ENCODE measurements at regions of chr10 and their contacts with region 1.

Region 1: GRCh38 chr10:72625608-72626443 is at the start of gene MICU1:
- DNase-seq: peak; percentile 93
- H3K4me3 Mint-ChIP-seq: peak within 1 kb of the TSS; percentile 96
- H3K27ac Mint-ChIP-seq: peak within 1 kb of the TSS; percentile 94
- H3K4me1 Mint-ChIP-seq: peaks cover 13% of the 10 kb centered on the region
- H3K27me3 Mint-ChIP-seq: peaks cover 6% of the 10 kb centered on the region
- total RNA-seq, gene MICU1: 28.4 and 29.5 TPM in 2 replicates

Region 2: GRCh38 chr10:72354478-72355213 is 271.2 kb before region 1 on chr10 and contains the start of gene DNAJB12:
- intact Hi-C with region 1: loop called (anchors 1 kb)
- DNase-seq: peak; percentile 86
- H3K4me3 Mint-ChIP-seq: peak within 1 kb of the TSS; percentile 97
- H3K27ac Mint-ChIP-seq: peak within 1 kb of the TSS; percentile 96
- H3K4me1 Mint-ChIP-seq: peaks cover 31% of the 10 kb centered on the region
- H3K27me3 Mint-ChIP-seq: peaks cover 2% of the 10 kb centered on the region
- total RNA-seq, gene DNAJB12: 32.4 and 38.0 TPM in 2 replicates

Region 3: GRCh38 chr10:72637398-72637857 is 11.6 kb after region 1 on chr10:
- intact Hi-C with region 1: loop called (anchors 1 kb)
- DNase-seq: peak; percentile 42
- H3K4me3 Mint-ChIP-seq: no peak overlapping the region
- H3K27ac Mint-ChIP-seq: peak overlapping the region; percentile 74
- H3K4me1 Mint-ChIP-seq: peaks cover 12% of the 10 kb centered on the region
- H3K27me3 Mint-ChIP-seq: peaks cover 10% of the 10 kb centered on the region

Measured in activated T-helper 1 cell treated with anti-CD3 and anti-CD28 coated beads, Interleukin-12 subunit alpha, Interleukin-12 subunit beta, Interleukin-2, Interleukin-4 antibody, amounts not matched to agents 30 ng/mL and 10 ng/mL and 1 ng/mL, durations not matched to agents 14 hours and 24 hours and 36 hours (primary cell).